H1 (cell line): ENCODE measurements at regions of chr19 and their contacts with region 1.

Region 1: GRCh38 chr19:38891771-38892170 is 7.6 kb downstream of the SIRT2 start:
- DNase-seq: no peak
- H3K4me3 ChIP-seq: no peak overlapping the region
- H3K27ac ChIP-seq: no peak overlapping the region
- H3K4me1 ChIP-seq: no peaks in the 10 kb centered on the region
- H3K27me3 ChIP-seq: no peaks in the 10 kb centered on the region
- CTCF ChIP-seq: no peak
- EP300 ChIP-seq: no peak
- POLR2A ChIP-seq: no peak
- RAD21 ChIP-seq: no peak

Region 2: GRCh38 chr19:38831142-38831605 is 60.6 kb before region 1 on chr19:
- CTCF ChIA-PET with region 1: interaction called, 11 read pairs
- POLR2A ChIA-PET with region 1: interaction called, 3 read pairs
- DNase-seq: no peak
- H3K4me3 ChIP-seq: peak overlapping the region; percentile 73 to 85 (median 82)
- H3K27ac ChIP-seq: peak overlapping the region; percentile 68; the same call in 1 of the 2 replicates
- H3K4me1 ChIP-seq: peaks cover 0 to 6% (median 1%) of the 10 kb centered on the region in 4 experiments; a peak in 1 of 7 replicates
- H3K27me3 ChIP-seq: no peaks in the 10 kb centered on the region
- CTCF ChIP-seq: no peak
- EP300 ChIP-seq: no peak
- POLR2A ChIP-seq: no peak; a peak in 1 of 3 replicates
- RAD21 ChIP-seq: no peak

Region 3: GRCh38 chr19:38869856-38870607 is 21.7 kb before region 1 on chr19:
- CTCF ChIA-PET with region 1: interaction called, 97 read pairs
- POLR2A ChIA-PET with region 1: interaction called, 3 read pairs
- DNase-seq: peak in 1 of 2 experiments; percentile 91
- H3K4me3 ChIP-seq: peak overlapping the region; percentile 38 to 63 (median 55)
- H3K27ac ChIP-seq: no peak overlapping the region
- H3K4me1 ChIP-seq: peaks cover 0 to 7% (median 4%) of the 10 kb centered on the region in 4 experiments; a peak in 5 of 7 replicates
- H3K27me3 ChIP-seq: peaks cover 0 to 11% (median 5%) of the 10 kb centered on the region in 4 experiments; a peak in 5 of 7 replicates
- CTCF ChIP-seq: peak; percentile 63 to 80 (median 73)
- EP300 ChIP-seq: peak in 1 of 2 experiments; percentile 66; a peak in 1 of 3 replicates
- POLR2A ChIP-seq: no peak
- RAD21 ChIP-seq: peak; percentile 22 to 57

Region 4: GRCh38 chr19:38877781-38878574 is 13.8 kb before region 1 on chr19 and contains the start of gene RINL:
- CTCF ChIA-PET with region 1: interaction called, 97 read pairs
- POLR2A ChIA-PET with region 1: interaction called, 8 read pairs
- DNase-seq: no peak
- H3K4me3 ChIP-seq: no peak within 1 kb of the TSS
- H3K27ac ChIP-seq: no peak within 1 kb of the TSS
- H3K4me1 ChIP-seq: peaks cover 0 to 8% (median 3%) of the 10 kb centered on the region in 4 experiments; a peak in 6 of 7 replicates
- H3K27me3 ChIP-seq: no peaks in the 10 kb centered on the region
- CTCF ChIP-seq: no peak
- EP300 ChIP-seq: no peak
- POLR2A ChIP-seq: no peak
- RAD21 ChIP-seq: no peak
- total RNA-seq, gene RINL: 11.9 and 14.2 TPM in 2 replicates

Region 5: DNA sequence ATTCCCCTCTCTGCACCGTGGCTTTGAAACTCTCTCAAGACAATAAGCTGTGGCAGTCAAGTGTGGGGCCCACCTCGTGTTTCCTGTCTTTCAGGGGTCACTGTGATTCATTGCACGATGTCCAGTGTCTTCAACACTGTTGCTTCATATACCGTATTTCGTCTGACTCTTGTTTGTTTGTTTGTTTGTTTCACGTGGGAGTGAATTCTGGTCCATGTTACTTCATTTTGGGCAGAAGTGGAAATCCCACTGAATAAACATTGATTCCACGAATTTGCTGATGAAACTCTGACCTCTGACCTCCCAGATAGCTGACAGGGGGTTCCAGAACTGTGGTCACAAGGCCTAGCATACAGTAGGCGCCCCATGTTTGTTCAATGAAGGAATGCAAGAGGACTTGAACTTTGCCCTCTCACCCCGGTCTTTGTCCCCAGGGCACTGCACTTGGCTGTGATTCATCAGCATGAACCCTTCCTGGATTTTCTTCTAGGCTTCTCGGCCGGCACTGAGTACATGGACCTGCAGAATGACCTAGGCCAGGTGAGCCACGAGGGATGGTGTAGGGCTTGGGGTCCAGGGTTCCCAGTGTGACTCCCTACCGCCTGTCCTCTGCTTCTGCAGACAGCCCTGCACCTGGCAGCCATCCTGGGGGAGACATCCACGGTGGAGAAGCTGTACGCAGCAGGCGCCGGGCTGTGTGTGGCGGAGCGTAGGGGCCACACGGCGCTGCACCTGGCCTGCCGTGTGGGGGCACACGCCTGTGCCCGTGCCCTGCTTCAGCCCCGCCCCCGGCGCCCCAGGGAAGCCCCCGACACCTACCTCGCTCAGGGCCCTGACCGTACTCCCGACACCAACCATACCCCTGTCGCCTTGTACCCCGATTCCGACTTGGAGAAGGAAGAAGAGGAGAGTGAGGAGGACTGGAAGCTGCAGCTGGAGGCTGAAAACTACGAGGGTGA is 13.1 kb after region 1 on chr19:
- CTCF ChIA-PET with region 1: interaction called, 11 read pairs
- POLR2A ChIA-PET with region 1: interaction called, 5 read pairs
- DNase-seq: no peak
- H3K4me3 ChIP-seq: no peak overlapping the region
- H3K27ac ChIP-seq: no peak overlapping the region
- H3K4me1 ChIP-seq: peaks cover 0 to 6% (median 3%) of the 10 kb centered on the region in 4 experiments; a peak in 3 of 7 replicates
- H3K27me3 ChIP-seq: no peaks in the 10 kb centered on the region
- CTCF ChIP-seq: no peak
- EP300 ChIP-seq: no peak
- POLR2A ChIP-seq: no peak
- RAD21 ChIP-seq: no peak

Region 6: GRCh38 chr19:38929929-38930775 is 38.4 kb after region 1 on chr19 and contains the start of gene SARS2:
- CTCF ChIA-PET with region 1: interaction called, 9 read pairs
- POLR2A ChIA-PET with region 1: interaction called, 13 read pairs
- DNase-seq: peak; percentile 95 to 96
- H3K4me3 ChIP-seq: peak within 1 kb of the TSS; percentile 62 to 93 (median 86)
- H3K27ac ChIP-seq: peak within 1 kb of the TSS; percentile 97
- H3K4me1 ChIP-seq: peaks cover 0 to 2% (median under 1%) of the 10 kb centered on the region in 4 experiments; a peak in 3 of 7 replicates
- H3K27me3 ChIP-seq: no peaks in the 10 kb centered on the region
- CTCF ChIP-seq: peak; percentile 92 to 98 (median 93)
- EP300 ChIP-seq: no peak
- POLR2A ChIP-seq: peak; percentile 97 to 99
- RAD21 ChIP-seq: peak; percentile 55 to 62
- total RNA-seq, gene SARS2: 59.2 and 68.0 TPM in 2 replicates